ENCODE measurements at regions of chr10 and their contacts with region 1.

Region 1: DNA sequence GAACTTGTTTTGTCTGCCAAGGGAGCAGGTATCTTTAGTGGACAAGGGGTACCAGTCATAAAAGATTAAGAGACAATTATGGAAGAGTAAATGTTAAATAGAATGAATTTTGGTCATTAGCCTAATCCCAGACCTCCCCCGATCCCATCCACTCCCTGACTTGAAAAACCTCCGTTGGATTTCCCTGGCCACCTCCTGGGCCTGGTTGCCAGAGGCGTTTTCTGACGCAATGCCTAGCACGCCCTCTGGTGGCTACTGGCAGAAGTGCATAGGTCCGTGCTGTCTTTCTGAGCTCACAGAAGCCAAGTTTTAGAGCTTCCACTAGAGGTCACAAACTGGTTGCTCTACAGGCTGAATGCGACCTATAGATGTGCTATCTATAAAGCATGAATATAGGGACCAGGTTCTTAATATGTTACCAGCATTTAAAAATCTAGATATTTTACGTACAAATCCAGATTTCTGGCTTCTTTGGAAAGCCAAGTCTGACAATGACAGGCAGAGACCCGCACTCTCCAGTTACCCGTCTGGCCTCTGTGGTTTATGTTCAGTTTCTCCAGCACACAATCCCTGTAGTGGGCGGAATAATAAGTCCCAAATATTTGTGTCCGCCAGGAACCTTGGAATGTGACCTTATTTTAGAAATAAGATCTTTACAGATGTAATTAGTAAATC is 39.8 kb downstream of the SPOCK2 start:
- DNase-seq: peak; percentile 92
- H3K4me3 ChIP-seq: no peak overlapping the region
- H3K27ac ChIP-seq: no peak overlapping the region
- H3K4me1 ChIP-seq: no peaks in the 10 kb centered on the region
- CTCF ChIP-seq: peak; percentile 100

Region 2: GRCh38 chr10:71829171-71829570 is 219.4 kb before region 1 on chr10:
- CTCF ChIA-PET with region 1: no interaction called
- POLR2A ChIA-PET with region 1: no interaction called
- intact Hi-C with region 1: no loop called
- DNase-seq: no peak
- H3K4me3 ChIP-seq: no peak overlapping the region
- H3K27ac ChIP-seq: no peak overlapping the region
- H3K4me1 ChIP-seq: peaks cover 19% of the 10 kb centered on the region
- CTCF ChIP-seq: no peak

Region 3: GRCh38 chr10:71893920-71894319 is 154.7 kb before region 1 on chr10:
- CTCF ChIA-PET with region 1: no interaction called
- POLR2A ChIA-PET with region 1: no interaction called
- intact Hi-C with region 1: loop called (anchors 1 kb)
- DNase-seq: no peak
- H3K4me3 ChIP-seq: no peak overlapping the region
- H3K27ac ChIP-seq: no peak overlapping the region
- H3K4me1 ChIP-seq: peaks cover 18% of the 10 kb centered on the region
- CTCF ChIP-seq: no peak

Region 4: DNA sequence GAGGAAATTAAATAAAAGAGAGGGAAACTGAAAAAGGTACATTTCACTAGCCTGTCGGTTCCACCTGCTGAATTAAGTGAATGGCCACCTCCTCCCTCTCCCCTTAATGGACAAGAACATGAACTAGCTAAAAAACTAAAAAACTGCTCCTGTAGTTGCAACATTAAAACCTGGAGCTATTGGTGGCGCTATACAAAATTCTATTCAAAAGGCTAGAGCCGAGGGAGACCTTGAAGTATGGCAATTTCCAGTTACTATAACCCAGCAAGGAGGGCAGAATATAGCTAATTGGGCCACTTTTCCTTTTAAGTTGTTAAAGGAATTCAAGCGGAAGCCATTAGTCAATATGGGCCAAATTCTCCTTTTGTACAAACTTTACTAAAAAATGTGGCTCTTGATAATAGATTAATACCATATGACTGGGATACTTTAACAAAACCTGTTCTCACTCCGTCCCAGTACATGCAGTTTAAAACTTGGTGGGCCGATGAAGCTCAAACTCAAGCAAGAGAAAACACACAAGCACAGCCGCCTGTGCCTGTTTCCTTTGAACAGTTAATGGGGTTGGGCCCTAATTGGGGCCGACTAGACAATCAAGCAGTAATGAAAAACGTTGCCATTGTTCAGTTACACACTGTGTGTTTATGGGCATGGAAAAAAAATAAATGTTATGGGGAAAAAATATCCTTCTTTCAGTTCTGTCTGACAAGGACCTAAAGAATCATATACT is 90.9 kb before region 1 on chr10:
- CTCF ChIA-PET with region 1: interaction called, 7 read pairs
- POLR2A ChIA-PET with region 1: interaction called, 3 read pairs
- intact Hi-C with region 1: loop called (anchors 1 kb)
- DNase-seq: no peak
- H3K4me3 ChIP-seq: no peak overlapping the region
- H3K27ac ChIP-seq: no peak overlapping the region
- H3K4me1 ChIP-seq: no peaks in the 10 kb centered on the region
- CTCF ChIP-seq: peak; percentile 32; the same call in 1 of the 2 replicates

Region 5: GRCh38 chr10:71974489-71975021 is 74.0 kb before region 1 on chr10:
- CTCF ChIA-PET with region 1: no interaction called
- POLR2A ChIA-PET with region 1: no interaction called
- intact Hi-C with region 1: no loop called
- DNase-seq: no peak
- H3K4me3 ChIP-seq: no peak overlapping the region
- H3K27ac ChIP-seq: no peak overlapping the region
- H3K4me1 ChIP-seq: no peaks in the 10 kb centered on the region
- CTCF ChIP-seq: no peak

Region 6: DNA sequence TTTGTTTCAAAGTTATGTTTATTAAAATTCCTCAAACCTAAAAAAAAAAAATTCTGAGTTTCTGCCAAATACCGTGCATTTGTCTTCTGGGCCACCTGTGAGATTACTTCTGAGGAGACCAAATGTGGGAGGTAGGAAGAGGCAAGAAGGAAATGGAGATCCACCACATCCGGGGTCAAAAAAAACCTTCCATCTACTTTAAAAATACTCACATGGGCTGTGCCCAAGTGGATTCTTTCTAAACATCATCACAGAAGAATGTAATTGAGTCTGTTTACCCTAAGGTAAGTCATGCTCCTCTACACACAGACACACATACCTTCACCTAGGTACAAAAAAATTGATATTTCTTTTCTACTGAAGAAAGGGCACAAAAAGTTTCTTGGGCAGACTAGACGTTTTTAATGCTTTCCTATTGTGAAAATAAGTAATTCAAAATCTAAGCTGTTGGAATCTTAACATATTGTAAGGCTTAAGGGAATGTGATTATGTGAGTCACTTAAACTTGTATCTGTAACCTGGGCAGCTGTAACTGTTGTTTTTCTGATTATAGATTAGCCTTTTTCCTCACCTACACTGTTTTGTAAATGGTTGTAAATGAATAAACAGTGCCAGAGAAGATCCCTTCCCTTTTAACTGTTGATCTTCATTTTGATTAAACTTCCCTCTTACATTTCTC is 58.9 kb after region 1 on chr10:
- CTCF ChIA-PET with region 1: no interaction called
- POLR2A ChIA-PET with region 1: no interaction called
- intact Hi-C with region 1: no loop called
- DNase-seq: peak; percentile 62
- H3K4me3 ChIP-seq: no peak overlapping the region
- H3K27ac ChIP-seq: no peak overlapping the region
- H3K4me1 ChIP-seq: peaks cover 29% of the 10 kb centered on the region
- CTCF ChIP-seq: no peak

Region 7: DNA sequence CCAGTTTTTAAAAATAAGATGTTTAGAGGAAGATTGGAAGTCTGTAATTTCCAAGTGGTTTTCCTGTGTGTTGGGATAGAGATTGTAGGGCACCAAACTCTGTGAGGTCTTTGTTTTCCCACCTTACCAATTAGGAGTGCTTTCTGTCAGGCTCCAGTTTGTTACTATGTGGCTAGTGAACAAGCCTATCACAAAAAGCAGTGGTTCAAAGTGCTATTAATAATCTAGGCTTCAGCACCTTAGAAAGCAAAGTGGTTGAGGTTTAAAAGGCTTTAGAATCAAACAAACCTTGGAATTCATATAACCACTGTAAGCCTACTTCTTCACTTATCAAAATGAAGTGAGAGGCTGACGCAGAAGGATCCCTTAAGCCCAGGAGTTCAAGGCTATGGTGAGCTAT is 156.1 kb after region 1 on chr10:
- CTCF ChIA-PET with region 1: no interaction called
- POLR2A ChIA-PET with region 1: no interaction called
- intact Hi-C with region 1: no loop called
- DNase-seq: no peak
- H3K4me3 ChIP-seq: no peak overlapping the region
- H3K27ac ChIP-seq: no peak overlapping the region
- H3K4me1 ChIP-seq: peaks cover 14% of the 10 kb centered on the region
- CTCF ChIP-seq: no peak

Region 8: DNA sequence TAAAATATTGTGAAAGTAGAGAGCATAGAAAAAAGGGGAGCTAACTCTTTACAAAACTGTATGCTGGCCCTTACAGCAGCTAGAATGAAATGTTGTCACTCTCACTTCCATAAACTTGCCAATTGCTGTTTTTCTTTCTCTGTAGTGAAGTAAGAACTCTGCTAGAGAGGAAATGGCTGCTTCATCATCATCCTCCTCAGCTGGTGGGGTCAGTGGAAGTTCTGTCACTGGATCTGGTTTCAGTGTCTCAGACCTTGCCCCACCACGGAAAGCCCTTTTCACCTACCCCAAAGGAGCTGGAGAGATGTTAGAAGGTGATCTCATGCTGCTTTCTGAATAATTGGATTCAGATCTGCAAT is 175.1 kb after region 1 on chr10:
- CTCF ChIA-PET with region 1: no interaction called
- POLR2A ChIA-PET with region 1: no interaction called
- intact Hi-C with region 1: loop called (anchors 1 kb)
- DNase-seq: no peak
- H3K4me3 ChIP-seq: no peak overlapping the region
- H3K27ac ChIP-seq: no peak overlapping the region
- H3K4me1 ChIP-seq: peaks cover 43% of the 10 kb centered on the region
- CTCF ChIP-seq: no peak